SK-N-SH (cell line): ENCODE measurements at regions of chr7 and their contacts with region 1.

Region 1: GRCh38 chr7:992709-993607 is 10.0 kb downstream of the CYP2W1 start:
- DNase-seq: peak; percentile 98
- H3K4me3 ChIP-seq: peak overlapping the region in 1 of 2 experiments; percentile 24; a peak in 1 of 4 replicates
- H3K27ac ChIP-seq: no peak overlapping the region
- H3K4me1 ChIP-seq: peaks cover 3 to 7% of the 10 kb centered on the region in 2 experiments; a peak in 2 of 4 replicates
- H3K27me3 ChIP-seq: no peaks in the 10 kb centered on the region
- CTCF ChIP-seq: peak; percentile 100
- EP300 ChIP-seq: 0 out of 4 replicates have a peak, but pooled peaks of 1 of the 2 experiments have one; percentile 17
- RAD21 ChIP-seq: peak; percentile 100

Region 2: DNA sequence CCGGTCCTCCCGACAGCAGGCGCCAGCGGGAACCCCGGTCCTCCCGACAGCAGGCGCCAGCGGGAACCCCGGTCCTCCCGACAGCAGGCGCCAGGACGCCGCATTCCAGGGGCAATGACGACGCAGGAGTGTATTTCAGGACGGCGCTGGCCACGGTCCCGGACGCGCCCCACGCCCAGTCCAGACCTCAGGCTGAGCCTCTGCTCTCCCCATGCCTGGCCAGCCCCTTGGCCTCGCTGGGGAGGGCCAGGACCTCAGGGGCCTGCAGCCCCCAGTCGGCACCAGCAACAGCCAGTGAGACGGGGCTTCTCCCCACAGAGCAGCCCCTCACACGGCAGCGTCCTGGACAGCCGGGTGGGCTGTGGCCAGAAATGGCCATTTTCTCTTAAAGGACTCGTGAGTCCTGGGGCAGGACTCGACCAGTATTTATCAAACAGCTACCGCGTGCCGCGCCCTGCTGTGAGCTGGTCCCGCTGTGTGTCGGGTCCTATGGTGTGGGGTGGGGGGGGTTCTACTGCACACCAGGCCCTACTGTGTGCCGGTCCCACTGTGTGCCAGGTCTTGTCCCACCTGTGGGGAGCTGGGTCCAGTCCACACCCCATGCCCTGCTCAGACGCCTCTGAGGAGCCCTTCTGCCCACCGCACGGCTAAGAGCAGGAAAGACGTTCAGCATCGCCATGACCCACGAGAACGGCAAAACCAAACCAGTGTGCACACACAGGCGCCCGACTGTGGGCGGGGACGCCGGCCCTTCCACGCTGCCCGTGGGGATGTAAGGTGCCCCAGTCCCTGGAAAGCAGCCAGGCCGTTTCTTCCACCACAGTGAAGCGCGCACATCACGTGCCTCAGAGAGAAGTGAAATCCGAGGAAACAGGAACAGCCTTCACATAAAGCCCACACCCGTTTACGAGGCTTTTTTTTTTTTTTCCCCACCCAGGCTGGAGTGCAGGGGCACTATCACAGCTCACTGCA is 83.3 kb before region 1 on chr7:
- CTCF ChIA-PET with region 1: interaction called, 48 read pairs
- POLR2A ChIA-PET with region 1: no interaction called
- DNase-seq: peak; percentile 82
- H3K4me3 ChIP-seq: peak overlapping the region in 1 of 2 experiments; percentile 37; a peak in 2 of 4 replicates
- H3K27ac ChIP-seq: no peak overlapping the region
- H3K4me1 ChIP-seq: peaks cover 4% of the 10 kb centered on the region in 2 experiments; a peak in 3 of 4 replicates
- H3K27me3 ChIP-seq: no peaks in the 10 kb centered on the region
- CTCF ChIP-seq: no peak
- EP300 ChIP-seq: no peak
- RAD21 ChIP-seq: no peak

Region 3: DNA sequence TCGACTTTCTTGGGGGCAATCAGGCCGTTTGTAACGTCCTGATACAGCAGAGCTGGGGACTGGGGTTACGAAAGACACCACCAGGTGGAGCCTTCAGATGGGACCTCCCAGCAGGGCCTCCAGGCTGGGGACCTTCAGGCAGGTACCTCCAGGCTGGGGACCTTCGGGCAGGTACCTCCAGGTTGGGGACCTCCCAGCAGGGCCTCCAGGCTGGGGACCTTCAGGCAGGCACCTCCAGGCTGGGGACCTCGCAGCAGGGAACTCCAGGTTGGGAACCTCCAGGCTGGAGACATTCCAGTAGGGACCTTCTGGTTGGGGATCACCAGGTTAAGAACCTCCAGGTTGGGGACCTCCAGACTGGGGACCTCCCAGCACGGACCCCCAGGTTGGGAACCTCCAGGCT is 27.9 kb after region 1 on chr7:
- CTCF ChIA-PET with region 1: interaction called, 101 read pairs
- POLR2A ChIA-PET with region 1: no interaction called
- DNase-seq: no peak
- H3K4me3 ChIP-seq: no peak overlapping the region
- H3K27ac ChIP-seq: no peak overlapping the region
- H3K4me1 ChIP-seq: no peaks in the 10 kb centered on the region; a peak in 1 of 4 replicates
- H3K27me3 ChIP-seq: no peaks in the 10 kb centered on the region
- CTCF ChIP-seq: peak; percentile 35
- EP300 ChIP-seq: no peak
- RAD21 ChIP-seq: no peak

Region 4: DNA sequence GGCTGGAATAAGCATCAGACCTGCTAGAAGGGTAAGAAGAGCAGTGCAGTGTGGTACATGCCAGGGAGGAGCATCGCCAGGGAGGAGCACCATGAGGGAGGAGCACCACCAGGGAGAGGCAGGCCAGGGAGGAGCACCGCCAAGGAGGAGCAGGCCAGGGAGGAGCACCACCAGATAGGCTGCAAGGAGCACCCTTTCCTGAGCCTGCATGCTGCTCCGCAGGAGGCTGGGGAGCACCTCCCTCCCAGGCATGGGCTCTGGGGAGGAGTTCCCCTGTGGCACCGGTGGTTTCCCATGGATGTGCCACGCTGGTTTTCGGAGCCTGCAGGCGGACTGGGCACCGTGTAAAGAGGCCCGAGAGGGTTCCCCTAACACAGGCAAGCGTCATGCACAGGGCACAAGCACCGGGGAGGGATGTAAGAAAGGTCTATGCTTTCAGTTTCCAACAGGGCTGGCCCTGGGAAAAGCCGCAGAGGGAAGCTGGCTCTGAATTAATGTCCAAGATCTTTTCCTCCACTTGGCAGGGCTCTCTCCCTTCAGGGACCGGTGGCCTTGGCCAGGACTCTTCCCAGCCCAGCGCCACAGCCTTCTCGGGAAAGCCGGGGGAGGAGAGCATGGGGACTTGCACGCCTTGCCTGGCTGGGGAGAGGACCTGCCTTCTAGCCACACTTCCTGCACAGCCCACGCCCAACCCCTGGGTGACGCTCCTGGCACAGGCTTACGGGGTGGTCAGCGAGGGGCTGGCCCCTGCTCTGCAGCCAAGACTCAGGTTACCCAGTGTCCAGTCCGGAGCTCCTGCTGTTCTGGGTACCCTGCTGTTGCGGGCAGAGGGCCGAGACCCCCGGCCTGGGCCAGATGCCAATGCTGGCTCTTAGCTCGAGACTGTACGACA is 83.5 kb after region 1 on chr7:
- CTCF ChIA-PET with region 1: interaction called, 126 read pairs
- POLR2A ChIA-PET with region 1: no interaction called
- DNase-seq: no peak
- H3K4me3 ChIP-seq: no peak overlapping the region
- H3K27ac ChIP-seq: no peak overlapping the region
- H3K4me1 ChIP-seq: peaks cover 0 to 12% of the 10 kb centered on the region in 2 experiments; a peak in 1 of 4 replicates
- H3K27me3 ChIP-seq: no peaks in the 10 kb centered on the region
- CTCF ChIP-seq: no peak
- EP300 ChIP-seq: no peak
- RAD21 ChIP-seq: no peak

Region 5: DNA sequence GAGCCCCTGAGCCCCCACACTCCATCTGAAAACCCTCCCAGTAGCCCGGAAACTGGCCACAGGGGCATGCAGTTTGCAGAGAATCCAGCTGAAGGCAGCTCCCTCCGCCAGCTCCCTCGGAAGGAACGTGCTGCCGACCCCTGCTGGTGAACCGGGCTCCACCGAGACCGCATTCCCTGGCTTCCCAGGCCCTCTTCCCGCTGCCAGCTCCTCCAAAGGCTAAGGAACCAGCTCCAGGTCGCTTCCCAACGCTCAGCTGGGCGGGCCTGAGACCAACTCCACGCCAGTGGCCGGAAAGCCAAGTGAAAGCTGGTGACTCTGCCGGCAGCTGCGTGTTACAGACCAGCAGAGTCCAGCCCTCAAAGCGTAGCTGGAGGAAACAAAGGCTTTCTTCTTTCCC is 130.8 kb after region 1 on chr7:
- CTCF ChIA-PET with region 1: interaction called, 65 read pairs
- POLR2A ChIA-PET with region 1: no interaction called
- DNase-seq: peak; percentile 79
- H3K4me3 ChIP-seq: no peak overlapping the region
- H3K27ac ChIP-seq: no peak overlapping the region
- H3K4me1 ChIP-seq: 0 out of 4 replicates have a peak, but pooled peaks cover 0 to 8% of the 10 kb centered on the region in 2 experiments
- H3K27me3 ChIP-seq: no peaks in the 10 kb centered on the region
- CTCF ChIP-seq: peak; percentile 49
- EP300 ChIP-seq: no peak
- RAD21 ChIP-seq: peak; percentile 61

Region 6: DNA sequence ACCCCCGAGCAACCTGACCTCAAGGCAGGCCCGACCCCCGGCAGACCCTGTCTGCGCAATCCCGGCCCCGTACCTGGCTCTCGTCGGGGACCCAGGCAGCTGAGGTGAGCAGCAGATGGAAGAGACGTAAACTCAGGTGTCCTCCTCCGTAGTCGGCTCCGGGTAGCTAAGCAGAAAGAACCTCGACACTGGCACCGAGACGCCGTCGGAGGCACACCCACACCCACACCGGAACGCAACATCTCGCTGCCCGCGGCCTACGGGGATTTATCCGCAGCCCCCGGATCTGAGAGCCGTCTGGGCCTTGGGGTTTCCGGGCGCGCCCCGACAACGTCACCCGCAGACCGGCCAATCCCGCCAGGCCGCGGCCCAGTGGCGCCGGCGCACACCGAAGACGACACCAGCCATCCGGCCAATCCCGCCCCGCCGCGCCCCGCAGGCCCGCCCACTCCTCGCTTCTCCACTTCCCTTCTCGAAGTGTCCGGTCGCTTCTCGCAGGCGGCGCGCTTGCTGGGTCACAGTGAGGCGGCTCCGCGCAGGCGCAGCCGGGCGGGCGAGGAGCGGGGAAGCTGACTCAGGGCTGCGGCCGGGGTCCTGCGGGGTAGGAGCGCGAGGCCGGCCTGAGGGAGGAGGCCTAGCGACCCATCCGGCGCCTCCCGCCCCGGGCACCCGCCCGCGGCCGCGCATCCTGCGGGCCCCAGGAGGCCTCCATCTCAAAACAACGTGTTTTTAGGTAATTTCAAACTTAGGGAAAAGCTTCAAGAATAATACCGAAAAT is 167.1 kb after region 1 on chr7 and contains the start of gene ZFAND2A:
- CTCF ChIA-PET with region 1: interaction called, 54 read pairs
- POLR2A ChIA-PET with region 1: no interaction called
- DNase-seq: peak; percentile 100
- H3K4me3 ChIP-seq: peak within 1 kb of the TSS; percentile 91 to 97
- H3K27ac ChIP-seq: peak within 1 kb of the TSS; percentile 81 to 94
- H3K4me1 ChIP-seq: peaks cover 14 to 16% of the 10 kb centered on the region in 2 experiments
- H3K27me3 ChIP-seq: no peaks in the 10 kb centered on the region
- CTCF ChIP-seq: no peak
- EP300 ChIP-seq: peak in 1 of 2 experiments; percentile 87; a peak in 2 of 4 replicates
- RAD21 ChIP-seq: no peak
- polyA plus RNA-seq, gene ZFAND2A: 38.9 and 48.5 TPM in 2 replicates

Region 7: DNA sequence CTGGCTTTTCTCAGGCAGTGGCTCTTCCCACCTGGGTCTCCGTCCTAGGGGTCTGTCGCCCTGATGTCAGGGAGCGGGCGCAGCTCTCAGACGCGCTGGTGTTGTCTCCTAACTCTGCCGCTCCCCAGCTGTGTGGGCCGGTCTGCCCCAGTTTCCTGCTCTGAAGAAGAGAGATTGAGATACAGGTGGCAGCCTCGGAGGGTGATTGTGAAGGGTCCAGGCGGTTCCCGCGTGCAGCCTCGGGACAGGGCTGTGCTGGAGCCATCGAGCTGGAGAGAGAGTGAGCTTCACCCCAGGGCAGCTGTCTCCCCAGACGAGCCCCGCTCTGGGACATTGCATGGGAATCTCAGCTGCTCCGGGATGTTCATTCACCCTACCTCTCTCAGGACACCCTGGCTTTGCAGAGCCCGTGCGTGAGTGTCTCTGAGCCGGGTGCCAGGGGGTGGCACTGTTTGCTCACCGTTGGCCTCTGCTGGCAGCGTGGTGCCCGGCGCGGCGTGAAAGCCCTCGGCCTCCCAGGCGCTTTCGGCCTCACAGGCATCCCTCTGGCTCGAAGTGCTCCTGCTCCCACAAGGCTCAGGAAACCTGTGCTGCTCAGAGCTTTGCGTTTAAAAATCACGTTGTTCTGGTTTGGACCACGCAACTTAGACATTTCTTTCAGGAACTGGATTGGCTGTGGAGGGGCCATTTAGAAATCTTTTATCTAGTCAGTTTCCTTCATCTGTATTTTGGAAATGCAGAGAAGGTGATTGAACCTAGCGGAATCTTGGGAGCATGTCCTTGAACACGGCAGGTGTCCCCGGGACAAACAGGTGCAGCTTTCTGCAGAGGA is 200.9 kb after region 1 on chr7:
- CTCF ChIA-PET with region 1: interaction called, 16 read pairs
- POLR2A ChIA-PET with region 1: no interaction called
- DNase-seq: peak; percentile 90
- H3K4me3 ChIP-seq: no peak overlapping the region
- H3K27ac ChIP-seq: no peak overlapping the region
- H3K4me1 ChIP-seq: peaks cover 0 to 3% of the 10 kb centered on the region in 2 experiments; a peak in 1 of 4 replicates
- H3K27me3 ChIP-seq: peaks cover 29% of the 10 kb centered on the region; the same call in 1 of the 2 replicates
- CTCF ChIP-seq: peak; percentile 75
- EP300 ChIP-seq: no peak
- RAD21 ChIP-seq: peak; percentile 90